B cell (primary cell): ENCODE measurements at regions of chr22 and their contacts with region 1.

Region 1: GRCh38 chr22:40878922-40879321 is 17.0 kb upstream of the DNAJB7 start:
- DNase-seq: no peak
- ATAC-seq: no peak
- H3K4me3 ChIP-seq: no peak overlapping the region
- H3K4me3 Mint-ChIP-seq: no peak overlapping the region
- H3K27ac ChIP-seq: no peak overlapping the region
- H3K27ac Mint-ChIP-seq: no peak overlapping the region
- H3K4me1 ChIP-seq: no peaks in the 10 kb centered on the region
- H3K4me1 Mint-ChIP-seq: no peaks in the 10 kb centered on the region
- H3K27me3 ChIP-seq: no peaks in the 10 kb centered on the region
- H3K27me3 Mint-ChIP-seq: no peaks in the 10 kb centered on the region
- CTCF ChIP-seq: no peak

Region 2: GRCh38 chr22:40588726-40589125 is 290.2 kb before region 1 on chr22:
- CTCF ChIA-PET with region 1: no interaction called
- POLR2A ChIA-PET with region 1: no interaction called
- intact Hi-C with region 1: no loop called
- DNase-seq: no peak
- ATAC-seq: no peak
- H3K4me3 ChIP-seq: no peak overlapping the region
- H3K4me3 Mint-ChIP-seq: no peak overlapping the region
- H3K27ac ChIP-seq: no peak overlapping the region
- H3K27ac Mint-ChIP-seq: no peak overlapping the region
- H3K4me1 ChIP-seq: peaks cover 20 to 24% of the 10 kb centered on the region in 2 donors
- H3K4me1 Mint-ChIP-seq: peaks cover 34% of the 10 kb centered on the region
- H3K27me3 ChIP-seq: no peaks in the 10 kb centered on the region
- H3K27me3 Mint-ChIP-seq: no peaks in the 10 kb centered on the region
- CTCF ChIP-seq: no peak

Region 3: GRCh38 chr22:40898850-40899357 is 20.0 kb after region 1 on chr22:
- CTCF ChIA-PET with region 1: no interaction called
- POLR2A ChIA-PET with region 1: interaction called, 20 read pairs
- intact Hi-C with region 1: no loop called
- DNase-seq: peak; percentile 65
- ATAC-seq: peak; percentile 57
- H3K4me3 ChIP-seq: no peak overlapping the region
- H3K4me3 Mint-ChIP-seq: no peak overlapping the region
- H3K27ac ChIP-seq: no peak overlapping the region
- H3K27ac Mint-ChIP-seq: no peak overlapping the region
- H3K4me1 ChIP-seq: no peaks in the 10 kb centered on the region
- H3K4me1 Mint-ChIP-seq: peaks cover 5% of the 10 kb centered on the region
- H3K27me3 ChIP-seq: no peaks in the 10 kb centered on the region
- H3K27me3 Mint-ChIP-seq: no peaks in the 10 kb centered on the region
- CTCF ChIP-seq: peak; percentile 63